HCT116 (cell line): ENCODE measurements at regions of chr1 and their contacts with region 1.

Region 1: DNA sequence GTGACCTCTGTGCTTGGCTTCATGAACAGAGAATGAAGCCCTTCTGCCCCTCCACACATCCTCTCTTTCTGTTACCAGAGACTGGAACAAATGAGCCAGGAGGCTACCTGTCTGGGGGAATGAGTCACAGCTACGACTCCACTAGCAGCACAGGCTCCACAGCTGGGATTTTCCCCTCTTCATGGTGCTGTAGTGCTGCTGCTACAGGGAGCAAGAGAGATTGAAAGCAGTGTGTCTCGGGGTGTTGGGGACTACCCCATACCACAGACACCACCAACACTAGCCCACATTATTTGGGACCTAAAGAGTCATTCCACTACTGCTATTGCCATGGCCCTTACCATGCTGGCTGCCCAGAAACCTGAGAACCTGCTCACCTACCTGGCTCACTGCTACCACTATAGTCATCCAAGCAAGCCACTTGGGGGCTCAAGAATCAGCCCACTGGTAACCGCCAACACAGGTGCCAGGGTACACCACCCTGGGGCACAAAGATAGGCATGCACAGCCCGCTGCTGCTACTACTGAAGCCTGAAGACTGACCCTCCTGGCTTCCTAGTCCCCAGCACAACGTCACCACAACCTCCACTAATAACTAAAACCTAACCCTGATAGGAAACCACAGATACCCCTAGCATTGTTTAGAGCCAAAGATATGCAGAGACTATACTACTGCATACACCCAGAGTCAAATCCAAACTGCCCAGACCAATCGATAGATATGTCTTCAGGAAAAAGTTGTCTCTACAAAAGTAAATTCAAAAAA is 17.7 kb downstream of the CD1E start:
- DNase-seq: no peak
- ATAC-seq: no peak
- H3K4me3 ChIP-seq: no peak overlapping the region
- H3K27ac ChIP-seq: no peak overlapping the region
- H3K4me1 ChIP-seq: no peaks in the 10 kb centered on the region
- H3K27me3 ChIP-seq: no peaks in the 10 kb centered on the region
- CTCF ChIP-seq: no peak
- POLR2A ChIP-seq: no peak
- RAD21 ChIP-seq: no peak

Region 2: GRCh38 chr1:158417586-158417985 is 46.2 kb after region 1 on chr1:
- CTCF ChIA-PET with region 1: no interaction called
- POLR2A ChIA-PET with region 1: no interaction called
- RAD21 ChIA-PET with region 1: no interaction called
- intact Hi-C with region 1: loop called (anchors 2 kb)
- DNase-seq: no peak
- ATAC-seq: no peak
- H3K4me3 ChIP-seq: no peak overlapping the region
- H3K27ac ChIP-seq: no peak overlapping the region
- H3K4me1 ChIP-seq: no peaks in the 10 kb centered on the region
- H3K27me3 ChIP-seq: no peaks in the 10 kb centered on the region
- CTCF ChIP-seq: no peak
- POLR2A ChIP-seq: no peak
- RAD21 ChIP-seq: no peak